Heart left ventricle (tissue), 16 donors: ENCODE measurements at regions of chrX and their contacts with region 1.

Region 1: GRCh38 chrX:50905334-50905733 is 5.2 kb upstream of the BMP15 start:
- DNase-seq: no peak
- ATAC-seq: no peak
- H3K4me3 ChIP-seq: no peak overlapping the region
- H3K27ac ChIP-seq: no peak overlapping the region
- H3K4me1 ChIP-seq: no peaks in the 10 kb centered on the region
- H3K27me3 ChIP-seq: peaks cover 0 to 17% (median 0%) of the 10 kb centered on the region in 9 donors
- CTCF ChIP-seq: peak in 4 of 12 donors; percentile 10 to 33 (median 18)
- POLR2A ChIP-seq: no peak

Region 2: DNA sequence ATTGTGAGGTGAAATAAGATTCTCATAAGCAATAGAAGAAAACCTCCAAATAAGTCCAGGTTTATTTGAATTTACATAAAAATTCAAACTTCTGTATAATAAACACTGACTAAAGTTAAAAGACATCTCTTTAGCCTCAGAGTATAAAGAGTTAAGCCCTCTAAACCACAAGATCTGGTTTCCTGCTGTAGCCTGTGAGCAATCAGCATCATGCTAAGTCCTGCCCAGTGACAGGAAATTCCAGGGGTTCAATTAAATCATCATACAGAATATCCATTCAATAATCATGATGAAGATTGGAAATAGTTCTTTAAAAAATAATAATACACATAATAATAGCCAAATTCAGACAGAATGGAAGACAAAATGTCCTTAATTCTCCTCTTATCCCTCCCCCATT is 295.5 kb before region 1 on chrX:
- intact Hi-C with region 1: no loop called
- DNase-seq: no peak
- ATAC-seq: no peak
- H3K4me3 ChIP-seq: no peak overlapping the region
- H3K27ac ChIP-seq: no peak overlapping the region
- H3K4me1 ChIP-seq: no peaks in the 10 kb centered on the region
- H3K27me3 ChIP-seq: peaks cover 0 to 9% (median 0%) of the 10 kb centered on the region in 9 donors
- CTCF ChIP-seq: no peak
- POLR2A ChIP-seq: no peak

Region 3: GRCh38 chrX:50747471-50747900 is 157.8 kb before region 1 on chrX:
- intact Hi-C with region 1: loop called (anchors 1 to 5 kb)
- DNase-seq: peak in 3 of 5 donors; percentile 7 to 33 (median 14)
- ATAC-seq: no peak
- H3K4me3 ChIP-seq: no peak overlapping the region
- H3K27ac ChIP-seq: no peak overlapping the region
- H3K4me1 ChIP-seq: no peaks in the 10 kb centered on the region
- H3K27me3 ChIP-seq: peaks cover 0 to 24% (median 0%) of the 10 kb centered on the region in 9 donors
- CTCF ChIP-seq: peak; percentile 44 to 71 (median 60)
- POLR2A ChIP-seq: no peak

Region 4: GRCh38 chrX:50813827-50814742 is 91.2 kb before region 1 on chrX and contains the start of gene SHROOM4:
- intact Hi-C with region 1: loop called in 1 of 10 experiments (anchors 10 kb)
- DNase-seq: peak; percentile 57 to 70 (median 60)
- ATAC-seq: peak; percentile 84 to 95 (median 90)
- H3K4me3 ChIP-seq: peak within 1 kb of the TSS; percentile 29 to 75 (median 60)
- H3K27ac ChIP-seq: peak within 1 kb of the TSS in 11 of 12 donors; percentile 64 to 81 (median 77)
- H3K4me1 ChIP-seq: no peaks in the 10 kb centered on the region
- H3K27me3 ChIP-seq: peaks cover 0 to 24% (median 0%) of the 10 kb centered on the region in 9 donors
- CTCF ChIP-seq: no peak
- POLR2A ChIP-seq: no peak
- total RNA-seq, gene SHROOM4: 8.1 to 25.5 (median 11.2) TPM

Region 5: DNA sequence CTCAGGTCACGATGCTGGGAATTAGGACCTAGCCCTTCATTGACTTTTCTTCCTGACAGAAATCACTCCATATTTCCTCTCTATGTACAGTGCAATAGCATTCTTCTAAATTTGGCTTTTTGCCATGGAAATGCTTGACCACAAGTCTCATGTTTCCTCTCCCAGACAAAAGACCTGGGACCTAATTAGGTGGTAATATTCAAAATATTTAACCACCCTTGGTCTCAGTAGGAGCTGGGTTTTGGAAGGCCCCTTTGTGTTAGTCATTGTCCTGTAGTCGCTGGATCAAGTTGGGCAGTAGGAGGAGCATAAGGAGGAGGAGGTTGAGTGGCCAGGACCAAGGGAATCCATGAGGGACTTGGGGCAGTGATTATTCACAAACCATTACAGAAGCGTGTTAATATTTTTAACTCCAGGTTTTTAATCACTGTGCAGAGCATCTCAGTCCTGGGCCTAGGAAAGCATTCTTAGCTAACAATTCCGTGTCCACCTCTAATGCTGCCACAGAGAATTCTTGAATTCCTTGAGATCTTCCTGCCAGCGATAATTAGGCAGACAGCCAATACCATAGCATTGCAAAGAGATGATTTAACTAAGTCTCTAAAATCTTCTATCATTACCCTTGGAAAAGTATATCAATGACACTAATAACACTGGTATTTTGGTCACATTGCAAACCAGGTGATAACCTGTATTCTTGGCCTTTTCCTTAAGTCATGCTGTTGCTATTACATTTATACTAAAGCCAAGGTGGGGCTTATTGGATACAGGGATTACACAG is 66.3 kb before region 1 on chrX:
- intact Hi-C with region 1: loop called in 1 of 10 experiments (anchors 10 kb)
- DNase-seq: peak in 1 of 5 donors; percentile 6
- ATAC-seq: peak in 2 of 4 donors; percentile 52 to 64
- H3K4me3 ChIP-seq: no peak overlapping the region
- H3K27ac ChIP-seq: no peak overlapping the region
- H3K4me1 ChIP-seq: no peaks in the 10 kb centered on the region
- H3K27me3 ChIP-seq: peaks cover 0 to 10% (median 0%) of the 10 kb centered on the region in 9 donors
- CTCF ChIP-seq: no peak
- POLR2A ChIP-seq: no peak

Region 6: GRCh38 chrX:50988649-50989048 is 83.3 kb after region 1 on chrX:
- intact Hi-C with region 1: loop called in 1 of 10 experiments (anchors 10 kb)
- DNase-seq: peak in 1 of 5 donors; percentile 23
- ATAC-seq: peak in 2 of 4 donors; percentile 51 to 59
- H3K4me3 ChIP-seq: no peak overlapping the region
- H3K27ac ChIP-seq: no peak overlapping the region
- H3K4me1 ChIP-seq: no peaks in the 10 kb centered on the region
- H3K27me3 ChIP-seq: peaks cover 0 to 41% (median 0%) of the 10 kb centered on the region in 9 donors
- CTCF ChIP-seq: peak; percentile 27 to 64 (median 52)
- POLR2A ChIP-seq: no peak

Region 7: DNA sequence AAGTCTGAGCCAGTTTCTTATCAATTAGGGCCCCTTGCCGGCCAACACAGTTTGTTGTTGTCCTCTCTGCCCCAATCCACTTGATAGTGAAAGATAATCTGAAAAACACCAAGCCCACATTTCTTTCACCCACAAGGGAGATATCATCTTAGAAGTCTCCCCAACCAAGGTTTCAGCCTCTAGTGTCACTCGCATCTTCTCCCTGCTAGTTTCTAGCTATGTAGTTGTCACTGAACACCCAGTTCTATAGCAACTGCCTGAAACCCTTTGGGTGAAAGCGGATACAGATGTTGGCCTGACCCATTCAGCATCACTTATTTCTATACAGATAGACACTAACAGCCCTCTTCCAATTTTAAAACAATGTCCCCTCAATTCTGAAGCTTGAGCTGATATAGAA is 121.5 kb after region 1 on chrX:
- intact Hi-C with region 1: no loop called
- DNase-seq: no peak
- ATAC-seq: no peak
- H3K4me3 ChIP-seq: no peak overlapping the region
- H3K27ac ChIP-seq: no peak overlapping the region
- H3K4me1 ChIP-seq: no peaks in the 10 kb centered on the region
- H3K27me3 ChIP-seq: peaks cover 0 to 13% (median 0%) of the 10 kb centered on the region in 9 donors
- CTCF ChIP-seq: no peak
- POLR2A ChIP-seq: no peak